Astrocyte of the cerebellum (primary cell): ENCODE measurements at regions of chr4 and their contacts with region 1.

Region 1: DNA sequence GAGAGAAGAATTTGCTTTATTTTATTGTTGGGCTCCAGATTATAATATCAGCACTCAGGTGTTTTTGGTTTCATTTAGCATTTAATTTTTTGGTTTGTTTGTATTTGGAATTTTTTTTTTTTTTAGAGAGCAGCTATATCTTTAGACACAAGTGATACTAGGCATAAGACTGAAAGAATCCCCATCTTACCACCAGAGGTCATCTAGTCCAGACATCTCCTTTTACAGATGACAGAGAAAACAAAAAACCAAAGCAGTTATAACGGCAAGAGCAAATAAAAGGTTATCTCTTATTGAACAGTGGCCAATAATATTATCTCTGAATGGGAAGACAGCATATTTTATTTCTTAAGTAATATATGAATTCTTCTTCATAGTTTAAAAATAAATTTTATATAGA is 22.8 kb downstream of the USP38 start:
- DNase-seq: no peak
- H3K4me3 ChIP-seq: no peak overlapping the region
- CTCF ChIP-seq: no peak

Region 2: GRCh38 chr4:143489106-143489505 is 281.5 kb after region 1 on chr4:
- in situ Hi-C with region 1: loop called (anchors 5 kb)
- DNase-seq: no peak
- H3K4me3 ChIP-seq: no peak overlapping the region
- CTCF ChIP-seq: no peak